ENCODE measurements at regions of chr4 and their contacts with region 1.

Region 1: GRCh38 chr4:103099691-103100392 is at the start of gene BDH2:
- DNase-seq: peak; percentile 86
- ATAC-seq: peak; percentile 99
- H3K4me3 ChIP-seq: peak within 1 kb of the TSS; percentile 30 to 72 (median 59)
- H3K4me3 Mint-ChIP-seq: peak within 1 kb of the TSS; percentile 89
- H3K27ac ChIP-seq: peak within 1 kb of the TSS in 1 of 2 donors; percentile 23
- H3K27ac Mint-ChIP-seq: peak within 1 kb of the TSS; percentile 84
- H3K4me1 ChIP-seq: peaks cover 8 to 11% of the 10 kb centered on the region in 2 donors
- H3K4me1 Mint-ChIP-seq: peaks cover 13% of the 10 kb centered on the region
- H3K27me3 ChIP-seq: no peaks in the 10 kb centered on the region
- H3K27me3 Mint-ChIP-seq: no peaks in the 10 kb centered on the region
- CTCF ChIP-seq: peak; percentile 85
- total RNA-seq, gene BDH2: 8.8 and 12.6 TPM in 2 replicates

Region 2: GRCh38 chr4:102263011-102263787 is 836.6 kb before region 1 on chr4:
- CTCF ChIA-PET with region 1: no interaction called
- POLR2A ChIA-PET with region 1: no interaction called
- intact Hi-C with region 1: no loop called
- DNase-seq: peak; percentile 61
- ATAC-seq: peak; percentile 74
- H3K4me3 ChIP-seq: no peak overlapping the region
- H3K4me3 Mint-ChIP-seq: no peak overlapping the region
- H3K27ac ChIP-seq: no peak overlapping the region
- H3K27ac Mint-ChIP-seq: no peak overlapping the region
- H3K4me1 ChIP-seq: no peaks in the 10 kb centered on the region
- H3K4me1 Mint-ChIP-seq: no peaks in the 10 kb centered on the region
- H3K27me3 ChIP-seq: no peaks in the 10 kb centered on the region
- H3K27me3 Mint-ChIP-seq: no peaks in the 10 kb centered on the region
- CTCF ChIP-seq: peak; percentile 79

Region 3: GRCh38 chr4:102344954-102345794 is 754.7 kb before region 1 on chr4 and contains the start of gene SLC39A8:
- CTCF ChIA-PET with region 1: no interaction called
- POLR2A ChIA-PET with region 1: no interaction called
- intact Hi-C with region 1: loop called (anchors 1 kb)
- DNase-seq: peak; percentile 93
- ATAC-seq: peak; percentile 88
- H3K4me3 ChIP-seq: peak within 1 kb of the TSS; percentile 75 to 91 (median 84)
- H3K4me3 Mint-ChIP-seq: peak within 1 kb of the TSS; percentile 87
- H3K27ac ChIP-seq: peak within 1 kb of the TSS; percentile 88 to 90
- H3K27ac Mint-ChIP-seq: peak within 1 kb of the TSS; percentile 90
- H3K4me1 ChIP-seq: peaks cover 21 to 23% of the 10 kb centered on the region in 2 donors
- H3K4me1 Mint-ChIP-seq: peaks cover 24% of the 10 kb centered on the region
- H3K27me3 ChIP-seq: no peaks in the 10 kb centered on the region
- H3K27me3 Mint-ChIP-seq: no peaks in the 10 kb centered on the region
- CTCF ChIP-seq: peak; percentile 91
- total RNA-seq, gene SLC39A8: 8.4 and 10.2 TPM in 2 replicates

Region 4: GRCh38 chr4:102449751-102450352 is 650.0 kb before region 1 on chr4:
- CTCF ChIA-PET with region 1: interaction called, 20 read pairs
- POLR2A ChIA-PET with region 1: no interaction called
- intact Hi-C with region 1: loop called (anchors 1 kb)
- DNase-seq: peak; percentile 76
- ATAC-seq: peak; percentile 60
- H3K4me3 ChIP-seq: no peak overlapping the region
- H3K4me3 Mint-ChIP-seq: no peak overlapping the region
- H3K27ac ChIP-seq: no peak overlapping the region
- H3K27ac Mint-ChIP-seq: no peak overlapping the region
- H3K4me1 ChIP-seq: peaks cover 4 to 8% of the 10 kb centered on the region in 2 donors
- H3K4me1 Mint-ChIP-seq: peaks cover 5% of the 10 kb centered on the region
- H3K27me3 ChIP-seq: no peaks in the 10 kb centered on the region
- H3K27me3 Mint-ChIP-seq: no peaks in the 10 kb centered on the region
- CTCF ChIP-seq: peak; percentile 71

Region 5: GRCh38 chr4:102760645-102761295 is 339.1 kb before region 1 on chr4 and contains the start of gene MANBA:
- CTCF ChIA-PET with region 1: interaction called, 4 read pairs
- POLR2A ChIA-PET with region 1: no interaction called
- intact Hi-C with region 1: loop called (anchors 5 kb)
- DNase-seq: peak; percentile 93
- ATAC-seq: peak; percentile 75
- H3K4me3 ChIP-seq: peak within 1 kb of the TSS; percentile 69 to 99 (median 87)
- H3K4me3 Mint-ChIP-seq: peak within 1 kb of the TSS; percentile 96
- H3K27ac ChIP-seq: peak within 1 kb of the TSS; percentile 98
- H3K27ac Mint-ChIP-seq: peak within 1 kb of the TSS; percentile 97
- H3K4me1 ChIP-seq: peaks cover 29 to 35% of the 10 kb centered on the region in 2 donors
- H3K4me1 Mint-ChIP-seq: peaks cover 51% of the 10 kb centered on the region
- H3K27me3 ChIP-seq: no peaks in the 10 kb centered on the region
- H3K27me3 Mint-ChIP-seq: no peaks in the 10 kb centered on the region
- CTCF ChIP-seq: no peak
- total RNA-seq, gene MANBA: 119 and 132 TPM in 2 replicates

Region 6: DNA sequence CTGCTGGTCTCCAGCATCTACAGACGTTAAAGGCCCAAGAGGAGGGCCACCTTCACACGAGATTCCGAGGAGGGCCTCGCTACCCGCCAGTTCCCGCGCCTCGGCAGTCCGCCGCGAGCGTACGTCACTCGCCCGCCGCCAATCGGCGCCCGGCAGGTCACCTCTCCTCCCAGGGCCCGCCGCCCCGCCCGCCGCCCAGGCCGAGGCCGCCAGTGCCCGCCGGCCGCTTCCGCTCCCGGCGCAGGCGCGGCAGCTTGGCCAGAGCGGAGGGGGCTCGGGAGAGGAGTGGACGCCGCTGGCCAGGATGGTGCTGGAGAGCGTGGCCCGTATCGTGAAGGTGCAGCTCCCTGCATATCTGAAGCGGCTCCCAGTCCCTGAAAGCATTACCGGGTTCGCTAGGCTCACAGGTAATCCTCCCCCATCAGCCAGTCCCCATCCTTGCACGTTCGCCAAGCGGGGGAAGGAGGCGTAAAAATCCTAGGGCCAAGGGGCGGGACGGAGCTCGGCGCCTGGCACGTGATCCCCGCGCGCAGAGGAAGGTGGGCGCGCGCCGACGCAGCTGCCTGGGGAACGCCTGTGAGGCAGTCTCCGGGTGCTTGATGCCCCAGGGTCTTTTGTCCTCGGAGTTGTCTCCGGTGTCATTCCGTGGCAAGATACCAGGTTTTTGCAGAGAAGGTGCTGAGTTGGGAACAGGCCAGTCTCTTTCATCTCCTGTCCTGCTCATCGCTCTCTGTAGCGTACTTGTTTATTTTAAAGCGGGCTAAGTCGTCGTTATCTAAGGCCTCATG is 230.9 kb before region 1 on chr4 and contains the start of gene CISD2:
- CTCF ChIA-PET with region 1: interaction called, 3 read pairs
- POLR2A ChIA-PET with region 1: no interaction called
- intact Hi-C with region 1: loop called (anchors 2 kb)
- DNase-seq: peak; percentile 95
- ATAC-seq: peak; percentile 87
- H3K4me3 ChIP-seq: peak within 1 kb of the TSS; percentile 75 to 89 (median 84)
- H3K4me3 Mint-ChIP-seq: peak within 1 kb of the TSS; percentile 93
- H3K27ac ChIP-seq: peak within 1 kb of the TSS; percentile 97
- H3K27ac Mint-ChIP-seq: peak within 1 kb of the TSS; percentile 97
- H3K4me1 ChIP-seq: peaks cover 22 to 23% of the 10 kb centered on the region in 2 donors
- H3K4me1 Mint-ChIP-seq: peaks cover 52% of the 10 kb centered on the region
- H3K27me3 ChIP-seq: no peaks in the 10 kb centered on the region
- H3K27me3 Mint-ChIP-seq: no peaks in the 10 kb centered on the region
- CTCF ChIP-seq: no peak
- total RNA-seq, gene CISD2: 15.1 and 16.0 TPM in 2 replicates

Region 7: GRCh38 chr4:102959498-102959897 is 140.3 kb before region 1 on chr4:
- CTCF ChIA-PET with region 1: no interaction called
- POLR2A ChIA-PET with region 1: no interaction called
- intact Hi-C with region 1: no loop called
- DNase-seq: no peak
- ATAC-seq: no peak
- H3K4me3 ChIP-seq: no peak overlapping the region
- H3K4me3 Mint-ChIP-seq: no peak overlapping the region
- H3K27ac ChIP-seq: no peak overlapping the region
- H3K27ac Mint-ChIP-seq: no peak overlapping the region
- H3K4me1 ChIP-seq: no peaks in the 10 kb centered on the region
- H3K4me1 Mint-ChIP-seq: no peaks in the 10 kb centered on the region
- H3K27me3 ChIP-seq: no peaks in the 10 kb centered on the region
- H3K27me3 Mint-ChIP-seq: no peaks in the 10 kb centered on the region
- CTCF ChIP-seq: no peak

Region 8: DNA sequence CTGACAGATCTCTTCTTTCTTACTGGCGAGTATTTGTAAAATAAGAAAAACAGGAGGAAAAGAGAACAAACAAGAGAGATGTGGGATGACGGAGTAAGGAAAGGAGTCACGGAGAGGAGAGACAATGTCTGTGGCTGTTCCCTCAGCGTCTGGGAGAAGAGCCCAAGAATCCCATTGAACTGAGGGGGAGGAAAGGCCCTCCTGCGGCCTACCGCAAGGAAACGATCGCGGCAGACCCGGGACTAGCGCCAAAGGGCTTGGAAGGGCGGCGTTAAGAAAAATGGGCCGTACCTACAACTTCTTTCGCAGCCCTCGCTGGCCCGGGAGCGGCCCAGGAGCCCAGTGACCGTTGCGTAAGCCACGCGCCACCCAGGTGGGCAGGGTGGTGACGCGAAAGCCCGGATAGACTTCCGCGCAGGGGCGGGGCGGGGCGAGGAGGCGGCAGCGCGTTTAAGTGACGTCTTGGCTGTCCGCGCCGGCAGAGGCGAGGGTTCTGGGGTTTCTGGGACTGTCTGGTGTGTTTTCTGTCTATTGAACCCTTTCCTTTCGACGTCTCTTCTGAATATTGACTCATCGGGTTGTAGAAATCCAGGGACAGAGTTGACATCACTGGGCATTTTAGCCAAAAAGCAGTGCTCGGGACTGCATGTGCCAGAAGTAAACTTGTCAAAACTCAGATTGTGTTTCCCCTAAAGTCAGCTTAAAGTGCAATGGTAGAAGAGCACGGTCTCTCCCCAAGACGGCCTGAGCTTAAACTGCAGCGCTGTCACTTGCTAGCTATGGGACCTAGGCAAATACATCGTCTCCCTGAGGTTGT is 80.3 kb before region 1 on chr4 and contains the start of gene SLC9B1:
- CTCF ChIA-PET with region 1: interaction called, 3 read pairs
- POLR2A ChIA-PET with region 1: no interaction called
- intact Hi-C with region 1: loop called (anchors 1 kb)
- DNase-seq: peak; percentile 94
- ATAC-seq: peak; percentile 98
- H3K4me3 ChIP-seq: peak within 1 kb of the TSS; percentile 65 to 92 (median 82)
- H3K4me3 Mint-ChIP-seq: peak within 1 kb of the TSS; percentile 96
- H3K27ac ChIP-seq: peak within 1 kb of the TSS; percentile 94 to 98
- H3K27ac Mint-ChIP-seq: peak within 1 kb of the TSS; percentile 95
- H3K4me1 ChIP-seq: peaks cover 17 to 21% of the 10 kb centered on the region in 2 donors
- H3K4me1 Mint-ChIP-seq: peaks cover 27% of the 10 kb centered on the region
- H3K27me3 ChIP-seq: no peaks in the 10 kb centered on the region
- H3K27me3 Mint-ChIP-seq: no peaks in the 10 kb centered on the region
- CTCF ChIP-seq: no peak
- total RNA-seq, gene SLC9B1: 1.9 and 2.1 TPM in 2 replicates

Region 9: DNA sequence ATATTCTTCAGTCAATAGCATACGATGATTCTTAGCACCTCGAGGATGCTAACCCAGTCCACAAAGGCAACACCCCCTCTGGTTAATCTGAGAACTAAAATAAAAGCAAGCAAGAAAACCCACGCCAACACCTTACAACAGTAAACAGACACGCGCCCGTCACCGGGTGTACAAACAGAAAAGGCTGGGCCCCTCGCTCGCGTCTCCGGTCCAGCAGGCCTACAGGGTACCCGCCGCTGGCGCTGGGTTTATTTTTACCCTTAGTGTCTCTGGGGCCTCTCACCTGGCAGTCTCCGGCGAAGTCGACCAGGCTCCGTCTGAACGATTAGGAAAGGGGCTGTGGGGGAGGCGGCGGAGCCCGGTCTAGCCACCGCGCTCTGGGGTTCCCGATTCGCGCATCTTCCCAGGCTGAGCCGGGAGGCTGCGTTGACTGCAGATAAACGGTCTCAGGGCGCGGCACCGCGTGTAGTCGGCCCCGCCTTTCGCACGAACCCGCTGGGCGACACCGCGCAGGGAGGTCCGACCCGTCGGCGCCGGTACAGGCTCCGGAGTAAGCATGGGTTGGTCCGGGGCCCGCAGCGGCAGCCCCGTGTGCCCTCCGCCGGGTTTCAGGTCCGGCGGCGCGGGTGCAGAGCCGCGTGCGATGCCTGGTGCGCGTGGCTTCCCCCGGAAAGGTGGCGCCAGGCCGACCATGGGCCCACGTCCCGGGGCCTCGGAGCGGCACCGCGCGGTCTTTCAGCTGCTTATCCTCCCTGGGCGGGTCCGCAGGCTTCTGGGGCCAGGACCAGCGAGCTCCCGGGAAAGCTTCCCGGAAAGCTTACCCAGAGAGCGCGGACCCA is 23.7 kb before region 1 on chr4:
- CTCF ChIA-PET with region 1: interaction called, 97 read pairs
- POLR2A ChIA-PET with region 1: interaction called, 4 read pairs
- intact Hi-C with region 1: loop called (anchors 2 kb)
- DNase-seq: peak; percentile 78
- ATAC-seq: peak; percentile 55
- H3K4me3 ChIP-seq: peak overlapping the region; percentile 65 to 83 (median 80)
- H3K4me3 Mint-ChIP-seq: peak overlapping the region; percentile 82
- H3K27ac ChIP-seq: peak overlapping the region; percentile 92
- H3K27ac Mint-ChIP-seq: peak overlapping the region; percentile 89
- H3K4me1 ChIP-seq: peaks cover 27 to 31% of the 10 kb centered on the region in 2 donors
- H3K4me1 Mint-ChIP-seq: peaks cover 35% of the 10 kb centered on the region
- H3K27me3 ChIP-seq: no peaks in the 10 kb centered on the region
- H3K27me3 Mint-ChIP-seq: no peaks in the 10 kb centered on the region
- CTCF ChIP-seq: peak; percentile 12

Region 10: GRCh38 chr4:103136671-103137445 is 37.0 kb after region 1 on chr4:
- CTCF ChIA-PET with region 1: no interaction called
- POLR2A ChIA-PET with region 1: no interaction called
- intact Hi-C with region 1: no loop called
- DNase-seq: no peak
- ATAC-seq: no peak
- H3K4me3 ChIP-seq: no peak overlapping the region
- H3K4me3 Mint-ChIP-seq: no peak overlapping the region
- H3K27ac ChIP-seq: no peak overlapping the region
- H3K27ac Mint-ChIP-seq: no peak overlapping the region
- H3K4me1 ChIP-seq: no peaks in the 10 kb centered on the region
- H3K4me1 Mint-ChIP-seq: no peaks in the 10 kb centered on the region
- H3K27me3 ChIP-seq: no peaks in the 10 kb centered on the region
- H3K27me3 Mint-ChIP-seq: no peaks in the 10 kb centered on the region
- CTCF ChIP-seq: no peak